Heart right ventricle (tissue), 16 donors: ENCODE measurements at regions of chrX and their contacts with region 1.

Region 1: DNA sequence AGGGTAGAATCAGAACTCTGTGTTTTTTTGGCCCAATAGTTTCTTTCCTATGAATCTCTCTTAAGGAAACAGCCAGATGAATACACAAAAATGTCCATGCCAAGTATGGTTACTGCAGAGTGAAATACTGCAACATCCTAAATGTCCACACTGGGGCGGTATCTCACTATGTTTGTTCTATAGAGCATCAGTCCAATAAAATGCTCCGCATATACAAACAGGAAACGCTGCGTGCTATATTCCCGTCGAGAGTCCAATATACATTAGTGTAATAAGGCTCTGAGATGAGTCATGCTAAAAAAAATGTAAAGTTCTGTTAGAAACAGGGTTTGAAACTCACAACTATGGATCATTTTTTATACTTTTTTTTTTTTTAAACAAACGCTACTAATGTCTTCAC is 72.9 kb upstream of the ENOX2 start:
- DNase-seq: peak in 1 of 2 donors; percentile 5
- ATAC-seq: peak in 1 of 8 donors; percentile 51
- H3K4me3 ChIP-seq: no peak overlapping the region
- H3K27ac ChIP-seq: no peak overlapping the region
- H3K4me1 ChIP-seq: no peaks in the 10 kb centered on the region
- H3K27me3 ChIP-seq: peaks cover 0 to 36% (median 0%) of the 10 kb centered on the region in 7 donors
- CTCF ChIP-seq: peak in 7 of 9 donors; percentile 47 to 61 (median 57)

Region 2: DNA sequence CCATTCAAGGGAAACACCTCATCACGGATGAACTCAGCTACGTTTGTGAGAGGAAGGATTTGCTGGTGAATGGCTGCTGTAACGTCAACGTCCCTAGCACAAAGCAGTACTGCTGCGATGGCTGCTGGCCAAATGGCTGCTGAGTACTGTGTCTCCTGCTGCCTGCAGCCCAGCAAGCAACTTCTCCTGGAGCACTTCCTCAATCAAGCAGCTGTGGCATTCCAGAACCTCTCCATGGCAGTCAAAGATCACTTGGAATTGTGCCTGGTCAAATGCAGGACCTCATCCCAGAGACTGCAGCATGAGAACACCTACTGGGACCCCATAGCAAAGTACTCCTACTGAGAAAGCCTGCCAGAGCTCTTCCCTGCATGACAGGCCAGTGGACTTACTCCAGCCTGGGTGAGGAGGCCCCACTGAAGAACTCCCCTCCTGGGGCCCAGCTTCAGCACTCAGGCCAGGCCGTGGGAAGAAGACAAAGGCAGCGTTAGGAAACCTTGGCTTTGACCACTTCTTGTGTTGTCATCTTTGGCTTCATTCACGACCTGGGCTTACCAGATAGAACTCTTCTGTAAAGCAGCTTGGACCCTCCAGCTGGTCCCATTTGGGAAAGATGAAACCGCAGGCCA is 329.9 kb before region 1 on chrX:
- intact Hi-C with region 1: no loop called
- DNase-seq: peak; percentile 3 to 15
- ATAC-seq: peak in 5 of 8 donors; percentile 25 to 82 (median 74)
- H3K4me3 ChIP-seq: no peak overlapping the region
- H3K27ac ChIP-seq: no peak overlapping the region
- H3K4me1 ChIP-seq: no peaks in the 10 kb centered on the region
- H3K27me3 ChIP-seq: no peaks in the 10 kb centered on the region
- CTCF ChIP-seq: no peak

Region 3: GRCh38 chrX:130916636-130917422 is 59.1 kb before region 1 on chrX:
- intact Hi-C with region 1: no loop called
- DNase-seq: peak in 1 of 2 donors; percentile 9
- ATAC-seq: peak in 4 of 8 donors; percentile 28 to 62 (median 45)
- H3K4me3 ChIP-seq: no peak overlapping the region
- H3K27ac ChIP-seq: no peak overlapping the region
- H3K4me1 ChIP-seq: no peaks in the 10 kb centered on the region
- H3K27me3 ChIP-seq: peaks cover 0 to 30% (median 0%) of the 10 kb centered on the region in 7 donors
- CTCF ChIP-seq: peak; percentile 49 to 90 (median 73)

Region 4: DNA sequence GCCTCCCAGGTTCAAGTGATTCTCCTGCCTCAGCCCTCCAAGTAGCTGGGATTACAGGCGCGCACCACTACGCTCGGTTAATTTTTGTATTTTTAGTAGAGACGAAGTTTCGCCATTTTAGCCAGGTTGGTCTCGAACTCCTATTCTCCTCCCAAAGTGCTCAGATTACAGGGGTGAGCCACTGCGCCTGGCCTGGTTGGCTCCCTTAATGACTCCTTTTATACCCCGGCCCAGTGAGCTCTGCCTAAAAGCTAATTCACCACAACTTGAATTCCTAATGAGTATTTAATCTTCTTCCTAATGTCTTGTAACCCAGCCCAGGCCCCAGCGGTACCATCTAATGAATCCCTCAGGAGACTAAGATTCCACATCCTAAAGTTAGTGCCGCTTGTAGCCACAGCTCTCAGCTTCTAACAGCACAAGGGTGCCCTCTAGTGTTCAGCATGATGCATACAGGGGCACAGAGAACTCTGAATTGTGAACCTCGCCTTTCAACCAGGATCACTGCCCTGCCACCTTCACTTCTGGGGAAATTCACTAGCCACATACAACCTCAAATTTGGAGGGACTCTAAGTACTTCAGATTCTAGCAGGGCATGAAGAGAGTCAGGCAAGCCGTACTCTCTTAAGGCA is 657.5 kb after region 1 on chrX:
- intact Hi-C with region 1: loop called in 8 of 10 experiments (anchors 5 to 10 kb)
- DNase-seq: peak in 1 of 2 donors; percentile 29
- ATAC-seq: peak in 3 of 8 donors; percentile 56 to 71 (median 66)
- H3K4me3 ChIP-seq: no peak overlapping the region
- H3K27ac ChIP-seq: no peak overlapping the region
- H3K4me1 ChIP-seq: no peaks in the 10 kb centered on the region
- H3K27me3 ChIP-seq: peaks cover 0 to 95% (median 0%) of the 10 kb centered on the region in 7 donors
- CTCF ChIP-seq: peak; percentile 36 to 86 (median 68)

Region 5: GRCh38 chrX:131677655-131678628 is 702.0 kb after region 1 on chrX:
- intact Hi-C with region 1: loop called in 2 of 10 experiments (anchors 5 kb)
- DNase-seq: peak in 1 of 2 donors; percentile 11
- ATAC-seq: peak in 1 of 8 donors; percentile 34
- H3K4me3 ChIP-seq: no peak overlapping the region
- H3K27ac ChIP-seq: no peak overlapping the region
- H3K4me1 ChIP-seq: no peaks in the 10 kb centered on the region
- H3K27me3 ChIP-seq: peaks cover 0 to 50% (median 0%) of the 10 kb centered on the region in 7 donors
- CTCF ChIP-seq: peak; percentile 19 to 69 (median 45)